ENCODE measurements at regions of chr6 and their contacts with region 1.

Region 1: DNA sequence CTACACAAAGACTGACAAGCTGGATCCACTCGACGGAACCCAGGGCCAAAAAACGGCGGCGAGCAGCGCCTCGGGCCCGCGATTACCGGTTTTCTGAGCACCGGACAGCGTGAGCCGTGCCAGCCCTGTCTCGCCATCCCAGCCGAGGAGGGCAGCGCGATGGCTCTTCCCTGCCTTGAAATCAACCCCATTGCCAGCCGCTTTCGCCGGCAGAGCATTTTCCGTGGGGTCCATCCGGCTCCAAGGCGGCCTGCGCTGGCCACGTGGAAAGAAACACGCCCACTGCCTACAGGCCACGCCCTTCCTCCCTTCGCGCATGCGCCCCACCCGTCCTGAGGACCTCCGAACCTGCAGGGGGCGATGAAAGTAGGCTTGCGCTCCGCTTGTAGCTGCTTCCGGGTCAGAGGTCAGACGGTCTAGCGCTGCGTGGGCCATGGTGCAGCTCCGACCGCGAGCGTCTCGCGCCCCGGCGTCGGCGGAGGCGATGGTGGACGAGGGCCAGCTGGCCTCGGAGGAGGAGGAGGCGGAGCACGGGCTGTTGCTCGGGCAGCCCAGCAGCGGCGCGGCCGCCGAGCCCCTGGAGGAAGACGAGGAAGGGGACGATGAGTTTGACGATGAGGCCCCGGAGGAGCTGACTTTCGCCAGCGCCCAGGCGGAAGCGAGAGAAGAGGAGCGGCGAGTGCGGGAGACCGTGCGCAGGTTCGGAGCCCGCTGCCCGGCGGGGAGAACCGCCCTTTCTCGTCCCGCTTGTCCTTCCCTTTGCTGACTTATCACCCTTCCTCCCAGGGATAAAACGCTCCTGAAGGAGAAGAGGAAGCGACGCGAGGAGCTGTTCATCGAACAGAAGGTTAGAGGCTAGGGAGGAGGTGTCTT is at the start of gene NOL7:
- DNase-seq: peak; percentile 77 to 98
- ATAC-seq: peak; percentile 87 to 95
- H3K4me3 ChIP-seq: peak within 1 kb of the TSS; percentile 94
- H3K27ac ChIP-seq: peak within 1 kb of the TSS; percentile 84 to 99
- H3K4me1 ChIP-seq: peaks cover 10% of the 10 kb centered on the region; the same call in 2 of the 3 replicates
- CTCF ChIP-seq: peak; percentile 55
- EP300 ChIP-seq: no peak
- POLR2A ChIP-seq: peak; percentile 69
- RAD21 ChIP-seq: peak in 1 of 2 experiments; percentile 12; a peak in 1 of 5 replicates
- polyA plus RNA-seq, gene NOL7: 41.2 and 75.1 TPM in 2 replicates

Region 2: DNA sequence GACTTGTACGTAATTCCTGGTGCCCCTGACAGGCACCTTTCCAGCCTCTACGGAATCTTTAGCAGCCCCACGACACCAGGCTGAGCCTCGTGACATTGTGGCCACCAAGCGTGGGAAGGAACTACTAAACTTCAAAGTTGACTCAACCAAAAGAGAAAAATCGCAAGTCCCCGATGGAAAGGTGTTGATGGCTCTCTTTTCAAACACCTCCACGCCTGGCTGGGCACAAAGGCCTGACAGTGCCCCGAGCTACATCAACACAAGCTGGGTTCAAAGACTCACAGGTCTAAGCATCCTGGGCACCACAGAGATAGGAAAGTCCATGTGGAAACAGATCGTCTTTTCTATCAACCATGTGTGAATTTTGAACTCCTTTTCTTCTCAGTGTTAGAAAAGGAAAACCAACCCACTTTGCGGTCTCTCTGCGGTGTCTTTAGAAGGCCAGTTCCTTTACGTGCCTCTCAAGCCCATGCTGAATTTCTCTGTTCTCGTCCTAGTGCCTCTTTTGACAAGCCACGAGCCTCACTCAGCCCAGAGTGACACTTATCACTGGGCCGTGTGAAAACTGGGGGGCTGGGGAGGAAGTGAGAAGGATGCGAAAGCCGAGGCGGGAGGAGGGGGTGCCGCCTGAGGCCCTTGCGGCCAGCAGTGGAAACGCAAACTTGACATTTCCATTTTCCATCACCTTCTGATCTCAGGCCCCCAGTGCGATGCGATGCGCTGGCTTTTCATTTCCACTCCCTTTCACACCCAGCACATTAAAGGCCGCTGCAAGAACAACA is 187.2 kb before region 1 on chr6:
- CTCF ChIA-PET with region 1: no interaction called
- POLR2A ChIA-PET with region 1: no interaction called
- DNase-seq: no peak
- ATAC-seq: no peak
- H3K4me3 ChIP-seq: no peak overlapping the region
- H3K27ac ChIP-seq: no peak overlapping the region
- H3K4me1 ChIP-seq: peaks cover 24% of the 10 kb centered on the region; the same call in 2 of the 3 replicates
- CTCF ChIP-seq: no peak
- EP300 ChIP-seq: no peak
- POLR2A ChIP-seq: no peak
- RAD21 ChIP-seq: no peak

Region 3: GRCh38 chr6:13629459-13630122 is 14.4 kb after region 1 on chr6:
- CTCF ChIA-PET with region 1: interaction called, 22 read pairs
- POLR2A ChIA-PET with region 1: interaction called, 6 read pairs
- DNase-seq: no peak
- ATAC-seq: no peak
- H3K4me3 ChIP-seq: no peak overlapping the region
- H3K27ac ChIP-seq: no peak overlapping the region
- H3K4me1 ChIP-seq: no peaks in the 10 kb centered on the region
- CTCF ChIP-seq: no peak
- EP300 ChIP-seq: no peak
- POLR2A ChIP-seq: no peak
- RAD21 ChIP-seq: no peak

Region 4: DNA sequence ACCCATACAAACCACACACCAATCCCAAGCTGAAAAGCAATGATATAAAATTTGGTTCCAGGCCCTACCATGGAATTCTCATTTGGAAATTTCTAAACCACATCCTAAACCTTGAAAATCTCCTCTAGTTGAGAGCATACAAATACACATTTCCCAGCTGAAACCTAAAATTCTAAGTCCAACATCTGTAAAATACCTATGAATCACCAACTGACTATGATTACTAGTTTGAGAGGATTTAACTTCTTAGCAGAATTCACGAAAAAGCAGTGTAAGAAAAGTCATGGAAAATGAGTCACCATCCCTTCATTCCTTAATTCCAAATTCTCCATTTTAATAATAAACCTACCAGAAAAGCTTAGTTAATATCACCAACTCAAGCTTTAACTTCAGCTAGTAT is 81.1 kb after region 1 on chr6:
- CTCF ChIA-PET with region 1: no interaction called
- POLR2A ChIA-PET with region 1: no interaction called
- DNase-seq: no peak
- ATAC-seq: no peak
- H3K4me3 ChIP-seq: no peak overlapping the region
- H3K27ac ChIP-seq: no peak overlapping the region
- H3K4me1 ChIP-seq: 0 out of 3 replicates have a peak, but pooled peaks cover 5% of the 10 kb centered on the region
- CTCF ChIP-seq: no peak
- EP300 ChIP-seq: no peak
- POLR2A ChIP-seq: no peak
- RAD21 ChIP-seq: no peak

Region 5: DNA sequence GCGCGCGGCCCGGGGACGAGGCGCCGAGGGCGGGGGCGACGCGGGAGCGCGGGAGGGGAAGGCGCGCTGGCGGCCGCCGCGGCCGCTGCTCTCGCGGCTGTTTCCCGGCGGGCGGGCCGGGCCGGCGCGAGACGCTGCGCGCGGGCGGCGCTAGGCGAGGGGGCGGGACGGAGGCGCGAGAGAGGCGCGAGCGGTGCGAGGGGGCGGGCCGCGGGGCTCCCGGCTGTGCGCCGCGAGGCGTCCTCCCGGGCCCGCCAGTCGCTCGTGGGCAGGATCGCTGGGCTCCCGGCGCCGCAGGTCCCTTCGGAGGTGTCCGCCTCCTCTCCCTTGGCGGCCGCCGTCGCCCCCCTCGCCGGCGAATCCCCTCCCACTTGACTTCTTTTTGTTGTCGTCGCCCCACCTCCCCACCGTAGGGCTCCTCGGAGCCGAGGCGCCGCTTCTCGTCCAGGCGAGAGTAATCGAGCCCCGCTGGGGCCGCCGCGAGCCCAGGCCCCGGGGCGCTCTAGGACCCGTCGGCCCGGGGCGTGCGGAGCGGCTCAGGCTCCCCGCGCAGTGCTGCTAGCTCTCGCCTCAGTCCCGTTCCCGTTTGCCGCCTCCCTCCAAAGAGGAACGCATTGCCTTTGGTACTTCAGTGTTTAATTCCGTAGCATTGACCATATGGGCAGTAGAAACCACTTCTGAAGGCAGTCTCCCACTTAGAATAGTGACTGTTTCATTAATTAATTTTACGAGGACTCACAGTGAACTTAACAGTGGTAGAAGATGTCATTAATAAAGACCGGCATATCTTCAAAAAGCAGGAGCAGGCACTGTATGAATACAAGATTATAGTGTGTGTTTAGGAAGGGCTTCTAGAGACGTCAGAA is 96.8 kb after region 1 on chr6 and contains the start of gene RANBP9:
- CTCF ChIA-PET with region 1: interaction called, 5 read pairs
- POLR2A ChIA-PET with region 1: interaction called, 14 read pairs
- DNase-seq: peak; percentile 48 to 81
- ATAC-seq: peak; percentile 89 to 93
- H3K4me3 ChIP-seq: peak within 1 kb of the TSS; percentile 78
- H3K27ac ChIP-seq: peak within 1 kb of the TSS; percentile 96 to 100
- H3K4me1 ChIP-seq: peaks cover 11% of the 10 kb centered on the region; the same call in 2 of the 3 replicates
- CTCF ChIP-seq: no peak
- EP300 ChIP-seq: no peak
- POLR2A ChIP-seq: peak; percentile 53
- RAD21 ChIP-seq: no peak
- polyA plus RNA-seq, gene RANBP9: 15.7 and 20.3 TPM in 2 replicates